ENCODE measurements at regions of chr18 and their contacts with region 1.

Region 1: GRCh38 chr18:77067291-77068061 is 65.1 kb downstream of the MBP start:
- DNase-seq: peak; percentile 86
- H3K4me3 ChIP-seq: peak overlapping the region in 1 of 3 experiments; percentile 2
- H3K27ac ChIP-seq: peak overlapping the region; percentile 79
- H3K4me1 ChIP-seq: peaks cover 66% of the 10 kb centered on the region
- H3K27me3 ChIP-seq: no peaks in the 10 kb centered on the region
- CTCF ChIP-seq: no peak
- POLR2A ChIP-seq: no peak

Region 2: GRCh38 chr18:77023102-77023782 is 44.2 kb before region 1 on chr18:
- CTCF ChIA-PET with region 1: no interaction called
- POLR2A ChIA-PET with region 1: no interaction called
- dilution Hi-C with region 1: no loop called
- intact Hi-C with region 1: no loop called
- DNase-seq: no peak
- H3K4me3 ChIP-seq: no peak overlapping the region
- H3K27ac ChIP-seq: no peak overlapping the region
- H3K4me1 ChIP-seq: no peaks in the 10 kb centered on the region
- H3K27me3 ChIP-seq: no peaks in the 10 kb centered on the region
- CTCF ChIP-seq: no peak
- POLR2A ChIP-seq: no peak

Region 3: DNA sequence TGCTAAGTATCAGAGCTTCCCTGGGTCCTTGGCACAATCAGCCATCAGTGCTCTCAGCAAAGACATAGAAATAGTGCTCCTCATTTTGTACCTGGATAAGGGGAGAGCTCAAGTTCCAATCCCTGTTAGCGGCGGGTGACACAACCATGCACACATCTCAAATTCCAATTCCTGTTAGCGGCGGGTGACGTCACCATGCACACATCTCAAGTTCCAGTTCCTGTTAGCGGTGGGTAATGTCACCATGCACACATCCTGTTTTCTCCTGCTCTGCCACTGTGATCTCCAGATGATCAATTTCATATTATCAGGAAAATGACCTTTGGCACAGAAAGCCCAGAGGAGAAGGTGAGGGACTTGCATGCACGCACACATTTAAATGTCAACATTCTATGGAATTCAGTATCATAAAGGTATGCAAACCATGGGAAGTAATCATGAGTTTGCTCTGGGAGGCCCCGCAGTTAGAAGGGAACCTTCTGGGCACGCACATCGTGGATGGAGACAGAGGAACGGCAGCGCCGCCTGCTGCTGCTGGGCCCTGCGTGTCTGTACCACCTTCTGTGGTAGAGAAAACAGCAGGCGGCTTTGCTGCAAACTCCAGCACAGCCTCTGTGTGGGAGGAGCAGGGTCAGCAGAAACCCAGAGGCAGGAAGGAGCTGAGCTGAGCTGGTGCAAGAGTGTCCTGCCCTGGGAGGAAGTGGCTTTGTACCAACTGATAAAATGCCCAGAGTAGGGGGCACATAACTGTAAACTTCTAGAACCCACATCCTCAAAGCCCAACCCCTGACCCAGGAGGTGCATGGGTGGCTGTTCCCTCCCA is 12.7 kb before region 1 on chr18:
- CTCF ChIA-PET with region 1: interaction called, 31 read pairs
- POLR2A ChIA-PET with region 1: no interaction called
- dilution Hi-C with region 1: no loop called
- intact Hi-C with region 1: loop called (anchors 1 kb)
- DNase-seq: peak; percentile 88
- H3K4me3 ChIP-seq: peak overlapping the region in 1 of 3 experiments; percentile 17
- H3K27ac ChIP-seq: peak overlapping the region; percentile 37
- H3K4me1 ChIP-seq: peaks cover 22% of the 10 kb centered on the region
- H3K27me3 ChIP-seq: no peaks in the 10 kb centered on the region
- CTCF ChIP-seq: peak; percentile 64 to 84
- POLR2A ChIP-seq: no peak

Region 4: GRCh38 chr18:77087393-77088141 is 20.1 kb after region 1 on chr18:
- CTCF ChIA-PET with region 1: interaction called, 3 read pairs
- POLR2A ChIA-PET with region 1: interaction called, 3 read pairs
- dilution Hi-C with region 1: no loop called
- intact Hi-C with region 1: loop called (anchors 1 kb)
- DNase-seq: peak; percentile 37
- H3K4me3 ChIP-seq: peak overlapping the region; percentile 6 to 49 (median 40)
- H3K27ac ChIP-seq: peak overlapping the region; percentile 74
- H3K4me1 ChIP-seq: peaks cover 13% of the 10 kb centered on the region
- H3K27me3 ChIP-seq: no peaks in the 10 kb centered on the region
- CTCF ChIP-seq: no peak
- POLR2A ChIP-seq: no peak

Region 5: GRCh38 chr18:77132371-77133050 is 65.0 kb after region 1 on chr18 and contains the start of gene MBP:
- CTCF ChIA-PET with region 1: interaction called, 4 read pairs
- POLR2A ChIA-PET with region 1: no interaction called
- dilution Hi-C with region 1: no loop called
- intact Hi-C with region 1: loop called (anchors 5 kb)
- DNase-seq: no peak
- H3K4me3 ChIP-seq: peak within 1 kb of the TSS; percentile 44 to 48 (median 46)
- H3K27ac ChIP-seq: no peak within 1 kb of the TSS
- H3K4me1 ChIP-seq: peaks cover 13% of the 10 kb centered on the region
- H3K27me3 ChIP-seq: peaks cover 4 to 28% of the 10 kb centered on the region in 2 experiments
- CTCF ChIP-seq: no peak
- POLR2A ChIP-seq: no peak
- total RNA-seq, gene MBP: 1.7 and 4.0 TPM in 2 replicates

Region 6: DNA sequence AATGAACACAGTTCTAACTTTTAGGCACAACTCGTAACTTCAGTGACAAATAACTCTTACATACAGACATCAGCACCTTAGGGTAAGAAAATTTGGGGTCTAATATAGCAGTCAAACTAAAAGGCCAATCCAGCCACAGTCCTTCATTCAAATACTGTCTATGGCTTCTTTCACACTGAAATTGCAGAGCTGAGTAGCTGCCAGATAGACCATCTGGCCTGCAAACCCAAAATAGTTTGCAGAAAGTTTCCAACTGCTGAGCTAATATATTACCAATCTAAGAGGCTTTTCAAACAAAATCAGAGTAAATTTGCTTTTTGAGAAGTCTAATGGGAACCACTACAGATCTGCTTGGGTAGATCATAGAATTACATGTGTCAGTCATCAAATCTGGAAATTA is 365.6 kb after region 1 on chr18:
- CTCF ChIA-PET with region 1: no interaction called
- POLR2A ChIA-PET with region 1: no interaction called
- dilution Hi-C with region 1: no loop called
- intact Hi-C with region 1: no loop called
- DNase-seq: no peak
- H3K4me3 ChIP-seq: no peak overlapping the region
- H3K27ac ChIP-seq: no peak overlapping the region
- H3K4me1 ChIP-seq: no peaks in the 10 kb centered on the region
- H3K27me3 ChIP-seq: no peaks in the 10 kb centered on the region
- CTCF ChIP-seq: no peak
- POLR2A ChIP-seq: no peak

Measured in endothelial cell of umbilical vein (primary cell).